ENCODE measurements at regions of chr14 and their contacts with region 1.

Region 1: DNA sequence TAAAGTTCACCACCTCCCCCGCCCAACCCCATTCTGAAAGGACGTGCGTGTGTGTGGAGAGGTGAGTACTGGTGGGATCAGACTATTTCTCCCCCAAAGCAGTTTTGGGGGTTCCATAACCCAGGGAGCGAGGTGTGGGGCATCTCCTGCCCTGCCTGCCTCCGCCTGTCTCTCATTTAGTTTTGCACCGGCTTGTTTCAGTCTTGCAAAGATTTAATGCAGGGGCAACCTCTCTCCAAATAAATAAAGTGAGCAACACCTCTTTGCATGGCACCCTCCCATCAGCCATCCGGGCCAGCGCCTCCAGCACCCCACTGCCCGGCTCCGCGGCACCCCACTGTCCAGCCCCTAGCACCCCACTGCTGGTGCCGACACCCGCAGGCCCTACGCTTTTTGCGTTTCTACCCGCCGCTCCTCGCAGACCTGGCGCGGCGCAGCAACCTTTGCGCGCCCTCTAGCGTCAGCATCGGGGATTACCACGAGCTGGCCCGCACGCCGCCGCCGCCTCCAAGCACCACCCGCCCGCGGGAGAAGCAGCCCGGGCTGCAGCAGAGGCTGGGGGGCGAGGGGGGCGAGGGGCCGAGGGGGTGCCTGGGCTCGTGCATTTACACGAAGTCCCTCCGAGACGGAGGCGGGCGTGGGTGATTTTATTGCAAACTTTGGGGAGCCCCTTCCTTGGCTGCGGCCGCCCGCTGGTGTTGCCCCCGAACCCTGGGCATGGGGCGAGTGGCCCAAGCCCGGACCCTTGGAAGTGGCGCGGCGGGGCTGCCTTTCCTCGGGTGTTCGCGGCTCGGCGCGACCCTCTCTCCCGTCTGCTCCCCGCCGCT is 55.8 kb upstream of the VRK1 start:
- DNase-seq: no peak
- H3K4me3 ChIP-seq: peak overlapping the region in 1 of 2 donors; percentile 41
- H3K27ac ChIP-seq: no peak overlapping the region
- H3K4me1 ChIP-seq: peaks cover 0 to 10% (median 8%) of the 10 kb centered on the region in 4 donors
- H3K27me3 ChIP-seq: peaks cover 0 to 88% of the 10 kb centered on the region in 2 donors
- CTCF ChIP-seq: peak; percentile 61 to 83

Region 2: DNA sequence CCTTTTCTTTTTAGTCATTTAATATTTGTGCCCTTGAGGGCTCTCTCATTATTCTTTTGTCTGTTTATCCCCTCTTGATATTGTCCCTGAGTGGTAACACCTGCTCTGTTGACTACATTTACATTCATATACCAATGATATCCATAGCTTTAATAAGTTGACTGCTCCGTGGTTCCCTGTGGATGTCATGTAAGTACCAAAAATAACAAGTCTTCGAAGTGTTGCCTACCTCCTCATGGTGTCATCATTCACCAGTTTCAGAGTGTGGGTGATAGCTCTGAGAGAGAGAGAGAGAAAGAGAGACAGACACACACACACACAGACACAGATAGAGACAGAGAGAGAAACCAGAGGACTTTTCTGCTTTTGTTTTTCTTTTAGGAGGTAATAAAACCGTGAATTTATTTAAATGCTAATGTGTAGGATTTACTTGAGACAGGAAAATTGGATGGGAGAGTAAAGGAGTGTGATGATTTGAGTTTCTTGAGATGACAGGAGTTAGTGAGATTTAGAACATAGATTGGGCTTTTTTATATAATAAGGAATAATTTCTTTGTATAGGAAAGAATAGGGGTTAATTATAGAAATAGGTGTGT is 187.0 kb before region 1 on chr14:
- intact Hi-C with region 1: no loop called
- DNase-seq: no peak
- H3K4me3 ChIP-seq: no peak overlapping the region
- H3K27ac ChIP-seq: no peak overlapping the region
- H3K4me1 ChIP-seq: no peaks in the 10 kb centered on the region
- H3K27me3 ChIP-seq: no peaks in the 10 kb centered on the region
- CTCF ChIP-seq: no peak

Region 3: GRCh38 chr14:96567289-96567899 is 174.0 kb before region 1 on chr14:
- intact Hi-C with region 1: loop called (anchors 10 kb)
- DNase-seq: no peak
- H3K4me3 ChIP-seq: no peak overlapping the region
- H3K27ac ChIP-seq: no peak overlapping the region
- H3K4me1 ChIP-seq: no peaks in the 10 kb centered on the region
- H3K27me3 ChIP-seq: no peaks in the 10 kb centered on the region
- CTCF ChIP-seq: peak; percentile 29 to 32

Region 4: GRCh38 chr14:96895658-96896271 is 154.4 kb after region 1 on chr14:
- intact Hi-C with region 1: no loop called
- DNase-seq: no peak
- H3K4me3 ChIP-seq: no peak overlapping the region
- H3K27ac ChIP-seq: no peak overlapping the region
- H3K4me1 ChIP-seq: no peaks in the 10 kb centered on the region
- H3K27me3 ChIP-seq: no peaks in the 10 kb centered on the region
- CTCF ChIP-seq: no peak

Measured in tibial artery (tissue), 4 donors.